Dorsolateral prefrontal cortex (tissue), 120 donors: ENCODE measurements at regions of chr21 and their contacts with region 1.

Region 1: DNA sequence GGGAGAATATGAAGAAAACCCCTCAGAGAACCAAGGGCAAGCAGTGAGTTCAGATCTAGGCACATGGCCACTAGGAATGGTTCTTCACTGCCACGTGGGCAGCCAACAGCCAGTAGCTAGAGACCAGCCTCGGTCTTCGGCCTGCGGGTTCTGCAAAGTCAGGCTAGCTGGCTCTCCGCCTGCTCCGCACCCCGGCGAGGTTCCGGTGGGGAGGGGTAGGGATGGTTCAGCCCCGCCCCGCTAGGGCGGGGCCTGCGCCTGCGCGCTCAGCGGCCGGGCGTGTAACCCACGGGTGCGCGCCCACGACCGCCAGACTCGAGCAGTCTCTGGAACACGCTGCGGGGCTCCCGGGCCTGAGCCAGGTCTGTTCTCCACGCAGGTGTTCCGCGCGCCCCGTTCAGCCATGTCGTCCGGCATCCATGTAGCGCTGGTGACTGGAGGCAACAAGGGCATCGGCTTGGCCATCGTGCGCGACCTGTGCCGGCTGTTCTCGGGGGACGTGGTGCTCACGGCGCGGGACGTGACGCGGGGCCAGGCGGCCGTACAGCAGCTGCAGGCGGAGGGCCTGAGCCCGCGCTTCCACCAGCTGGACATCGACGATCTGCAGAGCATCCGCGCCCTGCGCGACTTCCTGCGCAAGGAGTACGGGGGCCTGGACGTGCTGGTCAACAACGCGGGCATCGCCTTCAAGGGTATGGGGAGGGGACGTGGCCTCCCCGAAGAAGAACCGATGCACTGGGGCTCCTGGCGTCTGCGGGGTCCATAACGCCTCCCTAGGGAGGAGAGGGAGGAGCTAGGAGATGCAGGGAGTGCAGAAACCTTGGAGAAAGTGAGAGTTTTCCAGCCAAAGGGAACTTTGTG is at the start of gene CBR1:
- DNase-seq: peak; percentile 94 to 98 (median 97)
- H3K4me3 ChIP-seq: peak within 1 kb of the TSS; percentile 59 to 99 (median 86)
- H3K27ac ChIP-seq: peak within 1 kb of the TSS; percentile 70 to 98 (median 95)
- H3K27me3 ChIP-seq: no peaks in the 10 kb centered on the region
- CTCF ChIP-seq: peak in 27 of 56 donors; percentile 4 to 47 (median 22)
- total RNA-seq, gene CBR1: 41.1 to 388 (median 113) TPM

Region 2: GRCh38 chr21:36104317-36105300 is 34.7 kb after region 1 on chr21:
- intact Hi-C with region 1: loop called in 1 of 2 experiments (anchors 2 kb)
- DNase-seq: peak; percentile 34 to 83 (median 74)
- H3K4me3 ChIP-seq: peak overlapping the region; percentile 26 to 79 (median 60)
- H3K27ac ChIP-seq: peak overlapping the region in 58 of 59 donors; percentile 4 to 94 (median 85)
- H3K27me3 ChIP-seq: peaks cover 0 to 3% (median 0%) of the 10 kb centered on the region in 45 donors
- CTCF ChIP-seq: peak; percentile 46 to 91 (median 75)

Region 3: DNA sequence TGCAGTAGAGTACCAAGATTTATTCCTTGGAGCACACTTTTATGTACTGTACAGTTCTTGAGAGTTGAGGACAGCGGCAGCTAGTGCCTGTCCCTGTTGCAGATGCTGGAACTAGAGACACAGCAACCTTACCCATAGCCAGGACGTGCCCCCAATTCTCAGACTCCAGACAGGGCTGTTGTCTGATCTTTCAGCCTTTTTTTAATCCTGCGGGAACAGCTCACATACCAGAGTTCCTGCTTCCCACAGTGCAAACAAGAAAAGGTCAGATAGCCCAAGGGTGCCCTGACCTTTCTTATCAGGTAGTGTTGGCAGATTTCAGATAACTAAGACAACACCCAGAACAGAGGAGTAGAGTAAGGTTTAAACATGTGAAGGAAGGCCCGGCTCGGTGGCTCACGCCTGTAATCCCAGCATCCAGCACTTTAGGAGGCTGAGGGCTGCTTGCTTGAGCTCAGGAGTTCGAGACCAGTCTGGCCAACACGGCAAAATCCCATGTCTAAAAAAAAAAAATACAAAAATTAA is 165.2 kb after region 1 on chr21:
- intact Hi-C with region 1: no loop called
- DNase-seq: no peak
- H3K4me3 ChIP-seq: no peak overlapping the region
- H3K27ac ChIP-seq: no peak overlapping the region
- H3K27me3 ChIP-seq: no peaks in the 10 kb centered on the region
- CTCF ChIP-seq: no peak